PC-9 (cell line): ENCODE measurements at regions of chr3 and their contacts with region 1.

Region 1: GRCh38 chr3:146065573-146066006 is 95.4 kb downstream of the PLOD2 start:
- DNase-seq: peak; percentile 15 to 37
- H3K4me3 ChIP-seq: no peak overlapping the region
- H3K27ac ChIP-seq: no peak overlapping the region
- H3K4me1 ChIP-seq: 0 out of 2 replicates have a peak, but pooled peaks cover 9% of the 10 kb centered on the region
- H3K27me3 ChIP-seq: no peaks in the 10 kb centered on the region
- CTCF ChIP-seq: peak; percentile 91

Region 2: GRCh38 chr3:146189519-146190173 is 124.1 kb after region 1 on chr3:
- CTCF ChIA-PET with region 1: interaction called, 27 read pairs
- POLR2A ChIA-PET with region 1: no interaction called
- intact Hi-C with region 1: loop called (anchors 1 kb)
- DNase-seq: peak; percentile 16 to 45
- H3K4me3 ChIP-seq: no peak overlapping the region
- H3K27ac ChIP-seq: no peak overlapping the region
- H3K4me1 ChIP-seq: no peaks in the 10 kb centered on the region
- H3K27me3 ChIP-seq: no peaks in the 10 kb centered on the region
- CTCF ChIP-seq: peak; percentile 82

Region 3: GRCh38 chr3:146199762-146200161 is 134.2 kb after region 1 on chr3:
- CTCF ChIA-PET with region 1: no interaction called
- POLR2A ChIA-PET with region 1: no interaction called
- intact Hi-C with region 1: no loop called
- DNase-seq: no peak
- H3K4me3 ChIP-seq: no peak overlapping the region
- H3K27ac ChIP-seq: no peak overlapping the region
- H3K4me1 ChIP-seq: no peaks in the 10 kb centered on the region
- H3K27me3 ChIP-seq: no peaks in the 10 kb centered on the region
- CTCF ChIP-seq: no peak

Region 4: GRCh38 chr3:146241523-146242240 is 176.1 kb after region 1 on chr3:
- CTCF ChIA-PET with region 1: no interaction called
- POLR2A ChIA-PET with region 1: no interaction called
- intact Hi-C with region 1: no loop called
- DNase-seq: no peak
- H3K4me3 ChIP-seq: no peak overlapping the region
- H3K27ac ChIP-seq: no peak overlapping the region
- H3K4me1 ChIP-seq: no peaks in the 10 kb centered on the region
- H3K27me3 ChIP-seq: no peaks in the 10 kb centered on the region
- CTCF ChIP-seq: no peak